Right ventricle myocardium inferior (tissue), 1 donor: ENCODE measurements at regions of chr11 and their contacts with region 1.

Region 1: DNA sequence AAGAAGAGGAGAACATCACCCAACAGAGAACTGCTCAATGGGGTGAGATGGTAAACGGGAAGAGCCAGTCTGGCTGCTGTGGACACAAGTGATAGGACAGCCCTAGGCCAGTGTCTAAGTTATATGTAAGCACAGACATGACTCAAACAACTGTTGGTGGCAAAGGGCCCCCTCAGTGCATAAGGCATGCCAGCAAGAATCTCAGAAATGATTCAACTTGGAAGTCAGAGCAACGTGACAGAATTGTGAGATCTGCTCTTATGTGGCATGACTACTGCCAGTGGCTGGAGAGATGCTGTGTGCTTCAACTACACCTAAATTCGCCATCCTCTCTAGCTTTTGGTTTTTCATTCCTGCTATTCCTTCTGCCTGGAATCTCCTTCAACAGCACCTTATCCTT is 7.4 kb downstream of the SLN start:
- DNase-seq: no peak
- ATAC-seq: no peak

Region 2: GRCh38 chr11:107743191-107743590 is 38.7 kb after region 1 on chr11:
- intact Hi-C with region 1: loop called (anchors 1 kb)
- DNase-seq: no peak
- ATAC-seq: no peak

Region 3: DNA sequence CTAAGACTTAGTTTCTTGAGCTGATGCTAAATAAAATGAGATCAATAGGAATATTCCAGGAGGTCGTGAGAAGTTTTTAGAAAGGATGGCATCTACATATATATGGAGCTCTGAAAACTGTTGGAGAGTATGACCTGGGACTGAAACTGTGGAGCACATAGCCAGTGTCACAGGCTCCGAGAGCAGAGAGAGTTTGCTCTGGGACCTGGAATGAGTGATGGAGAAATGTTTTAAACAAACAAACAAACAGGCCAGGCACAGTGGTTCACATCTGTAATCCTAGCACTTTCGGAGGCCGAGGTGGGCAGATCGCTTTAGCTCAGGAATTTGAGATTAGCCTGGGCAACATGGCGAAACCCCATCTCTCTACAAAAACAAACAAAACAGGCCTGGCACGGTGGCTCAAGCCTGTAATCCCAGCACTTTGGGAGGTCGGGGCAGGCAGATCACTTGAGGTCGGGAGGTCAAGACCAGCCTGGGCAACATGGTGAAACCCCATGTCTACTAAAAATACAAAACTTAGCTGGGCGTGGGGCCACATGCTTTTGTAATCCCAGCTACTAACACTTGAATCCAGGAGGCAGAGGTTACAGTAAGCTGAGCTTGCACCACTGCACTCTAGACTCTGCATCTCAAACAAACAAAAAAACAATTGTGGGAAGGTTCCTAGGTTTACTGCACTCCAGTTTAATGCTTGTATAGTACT is 87.0 kb after region 1 on chr11:
- intact Hi-C with region 1: no loop called
- DNase-seq: no peak
- ATAC-seq: no peak